Ovary (tissue), 10 donors: ENCODE measurements at regions of chr5 and their contacts with region 1.

Region 1: GRCh38 chr5:171913987-171914273 is 92.5 kb downstream of the FBXW11 start:
- DNase-seq: no peak
- H3K4me3 ChIP-seq: no peak overlapping the region
- H3K27ac ChIP-seq: no peak overlapping the region
- H3K4me1 ChIP-seq: peaks cover 5% of the 10 kb centered on the region
- H3K27me3 ChIP-seq: no peaks in the 10 kb centered on the region
- CTCF ChIP-seq: no peak
- EP300 ChIP-seq: no peak
- POLR2A ChIP-seq: no peak

Region 2: DNA sequence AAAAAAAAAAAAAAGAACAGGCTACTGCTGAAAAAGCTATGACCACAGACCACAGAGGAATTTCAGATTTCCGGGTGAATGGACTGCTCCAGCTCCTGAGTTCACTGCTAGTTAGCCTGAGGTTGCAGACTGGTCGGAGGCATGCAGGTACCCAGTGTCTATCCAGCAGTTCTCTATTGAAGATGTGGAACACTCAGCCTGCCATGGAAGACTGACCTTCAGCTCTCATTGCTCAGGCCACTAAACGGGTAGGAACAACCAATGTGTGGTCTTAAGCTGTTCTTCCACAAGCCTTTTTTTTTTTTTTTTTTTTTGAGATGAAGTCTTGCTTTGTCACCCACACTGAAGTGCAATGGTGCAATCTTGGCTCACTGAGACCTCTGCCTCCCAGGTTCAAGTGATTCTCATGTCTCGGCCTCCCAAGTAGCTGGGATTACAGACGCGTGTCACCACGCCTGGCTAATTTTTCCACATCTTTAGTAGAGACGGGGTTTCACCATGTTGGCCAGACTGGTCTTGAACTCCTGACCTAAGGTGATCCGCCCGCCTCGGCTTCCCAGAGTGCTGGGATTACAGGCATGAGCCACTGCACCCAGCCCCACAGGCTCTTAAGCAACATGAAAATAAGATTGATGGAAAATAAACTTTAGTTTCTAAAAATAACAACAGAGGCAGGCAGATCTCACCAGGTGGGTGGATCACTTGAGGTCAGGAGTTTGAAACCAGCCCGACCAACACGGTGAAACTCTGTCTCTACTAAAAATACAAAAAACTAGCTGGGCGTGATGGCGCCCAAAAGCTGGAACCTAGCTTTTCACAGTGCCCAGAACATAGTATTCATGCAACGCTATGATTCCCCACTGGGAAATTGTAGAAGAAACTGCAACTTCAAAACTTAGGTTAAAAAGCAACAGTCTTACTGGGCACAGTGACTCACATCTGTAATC is 546.2 kb before region 1 on chr5:
- intact Hi-C with region 1: no loop called
- DNase-seq: no peak
- H3K4me3 ChIP-seq: no peak overlapping the region
- H3K27ac ChIP-seq: no peak overlapping the region
- H3K4me1 ChIP-seq: no peaks in the 10 kb centered on the region
- H3K27me3 ChIP-seq: no peaks in the 10 kb centered on the region
- CTCF ChIP-seq: no peak
- EP300 ChIP-seq: no peak
- POLR2A ChIP-seq: no peak

Region 3: GRCh38 chr5:171418316-171418981 is 495.5 kb before region 1 on chr5:
- intact Hi-C with region 1: loop called in 3 of 4 experiments (anchors 5 kb)
- DNase-seq: peak; percentile 72 to 88 (median 76)
- H3K4me3 ChIP-seq: peak overlapping the region; percentile 25
- H3K27ac ChIP-seq: no peak overlapping the region
- H3K4me1 ChIP-seq: peaks cover 6% of the 10 kb centered on the region
- H3K27me3 ChIP-seq: peaks cover 2% of the 10 kb centered on the region
- CTCF ChIP-seq: peak; percentile 68 to 95 (median 91)
- EP300 ChIP-seq: no peak
- POLR2A ChIP-seq: no peak

Region 4: GRCh38 chr5:171728686-171729085 is 185.2 kb before region 1 on chr5:
- intact Hi-C with region 1: no loop called
- DNase-seq: no peak
- H3K4me3 ChIP-seq: no peak overlapping the region
- H3K27ac ChIP-seq: no peak overlapping the region
- H3K4me1 ChIP-seq: no peaks in the 10 kb centered on the region
- H3K27me3 ChIP-seq: no peaks in the 10 kb centered on the region
- CTCF ChIP-seq: no peak
- EP300 ChIP-seq: no peak
- POLR2A ChIP-seq: no peak

Region 5: DNA sequence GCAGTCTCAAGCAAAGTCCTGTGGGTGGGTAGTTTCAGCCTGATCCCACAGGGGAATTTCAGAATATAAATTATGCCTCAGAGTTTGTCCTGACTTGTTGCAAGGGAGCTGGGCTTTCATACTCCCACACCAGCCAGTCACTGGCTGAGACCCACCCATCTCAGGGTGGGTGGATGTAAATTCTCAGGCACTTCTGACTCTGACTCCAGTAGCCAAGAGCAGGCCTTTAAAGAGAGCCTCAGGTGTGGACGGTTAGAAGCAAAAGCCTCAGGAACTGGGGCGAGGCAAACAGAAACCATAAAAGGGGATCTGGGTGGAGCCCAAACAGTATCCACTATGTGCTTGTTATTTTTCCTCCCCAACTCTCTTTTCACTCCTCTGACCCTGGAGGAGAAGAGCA is 121.1 kb after region 1 on chr5:
- intact Hi-C with region 1: loop called in 2 of 4 experiments (anchors 1 to 5 kb)
- DNase-seq: no peak
- H3K4me3 ChIP-seq: no peak overlapping the region
- H3K27ac ChIP-seq: no peak overlapping the region
- H3K4me1 ChIP-seq: no peaks in the 10 kb centered on the region
- H3K27me3 ChIP-seq: no peaks in the 10 kb centered on the region
- CTCF ChIP-seq: no peak
- EP300 ChIP-seq: no peak
- POLR2A ChIP-seq: no peak

Region 6: DNA sequence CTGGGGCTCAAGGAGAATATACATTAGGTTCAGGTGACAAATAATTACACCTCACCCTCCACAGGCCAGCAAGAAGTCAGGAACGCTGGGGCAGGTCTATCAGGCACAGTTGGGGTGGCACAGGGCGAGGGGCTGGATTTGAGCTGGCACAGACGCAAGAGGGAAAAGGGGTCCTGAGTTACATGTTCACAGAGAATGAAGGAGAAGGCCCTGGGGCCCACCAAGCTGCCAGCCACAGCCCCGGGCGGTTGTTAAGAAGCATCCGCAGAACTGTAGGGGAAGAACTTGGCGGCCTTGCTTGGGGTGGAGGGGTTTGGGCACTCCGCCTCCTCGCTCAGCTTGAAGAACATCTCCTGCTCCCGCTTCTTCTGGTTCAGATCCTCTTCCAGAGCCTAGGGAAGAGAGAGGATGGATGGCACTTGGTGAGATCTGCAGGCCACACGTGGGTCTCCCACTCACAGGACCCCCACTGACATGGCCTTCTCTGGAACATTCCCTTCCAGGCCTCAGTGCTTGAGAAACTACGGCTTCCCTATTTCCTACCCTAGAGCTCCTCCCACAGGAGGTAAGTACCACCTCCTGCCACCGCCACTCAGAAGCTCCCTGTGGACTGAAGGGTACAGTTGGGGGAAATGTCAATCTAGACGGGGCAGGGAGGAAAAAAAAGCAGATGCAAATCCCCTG is 130.8 kb after region 1 on chr5:
- intact Hi-C with region 1: loop called in 2 of 4 experiments (anchors 1 to 5 kb)
- DNase-seq: no peak
- H3K4me3 ChIP-seq: no peak overlapping the region
- H3K27ac ChIP-seq: no peak overlapping the region
- H3K4me1 ChIP-seq: peaks cover 4% of the 10 kb centered on the region
- H3K27me3 ChIP-seq: no peaks in the 10 kb centered on the region
- CTCF ChIP-seq: no peak
- EP300 ChIP-seq: no peak
- POLR2A ChIP-seq: no peak

Region 7: DNA sequence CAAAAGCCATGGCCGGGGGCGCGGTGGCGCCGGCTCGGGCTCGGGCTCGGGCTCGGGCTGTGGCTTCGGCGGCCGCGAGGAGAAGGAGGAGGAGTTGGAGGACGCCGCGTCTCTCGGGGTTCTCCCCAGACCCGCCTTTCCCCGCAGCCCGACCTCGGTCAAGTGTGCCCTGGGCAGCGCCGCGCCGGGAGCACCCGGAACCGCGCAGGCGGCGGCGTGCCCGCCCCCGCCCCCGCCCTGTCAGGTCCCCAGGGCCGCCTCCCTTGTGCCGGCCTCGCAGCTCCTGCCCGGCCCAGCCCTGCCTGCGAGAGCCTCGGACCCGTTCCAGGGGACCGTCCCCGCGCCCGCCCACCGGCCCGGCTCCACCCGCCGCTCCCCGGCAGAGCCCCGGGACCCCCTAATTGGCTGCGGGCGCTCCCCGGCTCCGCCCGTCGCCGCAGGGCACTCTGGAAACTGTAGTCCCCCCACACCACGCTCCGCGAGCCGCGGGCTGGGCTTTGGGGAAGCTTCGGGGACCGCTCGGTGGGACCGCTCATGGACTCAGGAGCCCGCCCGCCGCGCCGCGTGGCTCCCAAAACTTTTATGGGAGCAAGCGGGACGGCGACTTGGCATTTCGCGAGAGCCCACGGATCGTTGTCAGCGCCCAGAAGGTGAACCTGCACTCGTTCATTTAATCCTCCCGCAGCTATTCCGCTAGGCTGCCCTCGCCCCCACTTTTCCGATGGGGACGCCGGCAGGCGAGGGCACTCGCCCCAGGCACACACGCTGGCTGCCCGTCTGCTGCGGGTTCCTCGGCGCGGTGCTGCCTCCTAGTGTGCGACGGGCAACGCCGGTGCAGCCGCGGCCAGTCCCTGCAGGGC is 274.3 kb after region 1 on chr5 and contains the start of gene STK10:
- intact Hi-C with region 1: loop called in 2 of 4 experiments (anchors 10 kb)
- DNase-seq: peak; percentile 85 to 91 (median 89)
- H3K4me3 ChIP-seq: peak within 1 kb of the TSS; percentile 91
- H3K27ac ChIP-seq: peak within 1 kb of the TSS; percentile 70 to 73
- H3K4me1 ChIP-seq: no peaks in the 10 kb centered on the region
- H3K27me3 ChIP-seq: no peaks in the 10 kb centered on the region
- CTCF ChIP-seq: peak; percentile 40 to 80 (median 74)
- EP300 ChIP-seq: no peak
- POLR2A ChIP-seq: no peak
- total RNA-seq, gene STK10: 7.6 to 15.5 (median 10.0) TPM

Region 8: DNA sequence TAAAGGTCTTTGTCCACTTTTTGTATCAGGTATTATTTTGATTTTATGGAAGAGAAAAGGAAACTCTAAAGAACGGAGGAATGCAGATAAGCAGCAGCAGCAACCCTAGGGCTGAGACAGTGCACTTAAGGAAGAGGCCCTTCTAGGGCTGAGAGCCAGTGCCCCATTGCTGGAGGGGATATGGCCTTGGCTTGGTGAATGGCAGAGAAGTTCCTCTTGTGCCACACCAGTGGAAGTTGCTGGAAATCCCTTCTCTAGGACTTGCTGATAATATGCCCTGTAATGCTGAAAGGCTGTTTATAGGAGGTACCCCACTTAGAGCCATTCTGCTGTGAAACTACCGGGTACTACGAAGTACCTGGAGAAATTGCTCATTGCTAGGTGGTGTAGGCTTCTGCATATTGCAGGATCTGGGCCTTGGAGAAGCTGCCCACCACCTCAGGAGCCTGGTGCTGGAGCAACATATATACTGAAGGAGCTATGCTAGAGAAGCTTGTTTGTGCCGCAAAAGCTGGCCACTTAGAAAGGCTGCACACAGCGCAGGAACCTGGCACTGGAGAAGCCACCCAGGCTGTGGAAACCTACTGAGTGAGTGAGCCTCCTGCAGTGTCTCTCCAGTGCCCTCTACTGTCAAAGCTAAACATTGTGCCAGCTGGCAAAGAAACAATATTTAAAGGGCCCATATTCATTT is 379.3 kb after region 1 on chr5:
- intact Hi-C with region 1: loop called in 1 of 4 experiments (anchors 10 kb)
- DNase-seq: peak; percentile 46 to 58 (median 56)
- H3K4me3 ChIP-seq: no peak overlapping the region
- H3K27ac ChIP-seq: no peak overlapping the region
- H3K4me1 ChIP-seq: no peaks in the 10 kb centered on the region
- H3K27me3 ChIP-seq: no peaks in the 10 kb centered on the region
- CTCF ChIP-seq: peak; percentile 50 to 64 (median 55)
- EP300 ChIP-seq: no peak
- POLR2A ChIP-seq: no peak